A673 (cell line): ENCODE measurements at regions of chr2 and their contacts with region 1.

Region 1: DNA sequence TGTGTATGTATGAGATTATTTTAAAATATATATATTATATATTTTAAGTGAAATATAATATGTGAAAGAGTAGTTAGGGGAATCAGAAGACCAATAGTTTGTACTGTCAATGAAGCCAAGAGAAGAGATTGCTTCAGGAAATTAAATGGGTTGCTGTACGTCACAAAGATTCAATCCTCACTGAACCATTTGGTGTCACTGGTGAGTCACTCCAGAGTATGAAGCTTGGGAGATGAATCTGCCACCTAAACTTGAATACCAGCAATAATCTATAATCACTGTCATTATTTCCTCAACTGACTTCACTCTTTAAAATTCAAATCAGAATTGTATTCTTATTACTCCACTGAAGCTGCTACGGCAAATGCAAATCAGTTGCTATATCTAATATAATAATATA is 41.9 kb upstream of the SCN9A start:
- DNase-seq: peak; percentile 78
- H3K4me3 ChIP-seq: no peak overlapping the region
- H3K27ac ChIP-seq: no peak overlapping the region
- H3K4me1 ChIP-seq: no peaks in the 10 kb centered on the region
- H3K27me3 ChIP-seq: no peaks in the 10 kb centered on the region
- CTCF ChIP-seq: peak; percentile 57

Region 2: GRCh38 chr2:165953655-165954606 is 463.7 kb before region 1 on chr2 and contains the start of gene TTC21B:
- CTCF ChIA-PET with region 1: no interaction called
- POLR2A ChIA-PET with region 1: no interaction called
- intact Hi-C with region 1: loop called (anchors 10 kb)
- DNase-seq: peak; percentile 99
- H3K4me3 ChIP-seq: peak within 1 kb of the TSS; percentile 68
- H3K27ac ChIP-seq: peak within 1 kb of the TSS; percentile 86
- H3K4me1 ChIP-seq: peaks cover 31% of the 10 kb centered on the region
- H3K27me3 ChIP-seq: no peaks in the 10 kb centered on the region
- CTCF ChIP-seq: peak; percentile 90
- total RNA-seq, gene TTC21B: 83.0 TPM in 2 replicates

Region 3: DNA sequence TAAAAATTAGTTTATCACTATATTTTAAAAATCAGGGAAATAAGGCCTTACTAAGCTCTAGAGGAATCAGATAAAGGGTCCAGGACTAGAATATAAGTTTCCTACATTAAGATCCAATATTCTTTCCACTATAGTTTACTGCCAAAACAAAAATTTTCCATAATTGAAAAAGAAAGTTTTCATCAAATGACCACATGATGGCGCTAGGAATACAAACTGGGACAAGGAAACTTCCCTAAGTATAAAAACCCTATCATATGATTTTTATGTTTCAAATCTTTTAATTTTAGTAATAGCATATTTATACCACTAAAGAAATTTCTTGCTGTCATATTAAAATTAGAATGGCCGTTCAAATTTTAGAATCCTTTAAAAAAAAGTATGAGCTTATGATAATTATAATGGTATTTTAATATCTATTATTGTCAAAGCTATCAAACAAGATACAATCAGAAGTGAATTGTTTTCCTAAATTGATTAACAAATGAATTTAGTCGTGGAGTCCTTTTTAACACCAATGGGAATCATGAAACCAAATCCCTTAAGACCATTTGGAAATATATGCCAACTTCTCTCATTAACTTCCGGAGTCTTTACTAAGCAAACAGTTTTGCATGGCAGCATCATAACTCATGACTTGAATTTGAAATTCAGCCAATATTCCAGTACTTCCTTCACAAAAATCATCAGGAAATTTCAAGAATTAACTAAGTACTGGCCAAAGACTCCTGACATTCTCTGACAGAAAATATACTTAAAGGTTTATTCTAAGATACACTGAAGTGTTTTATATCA is 360.1 kb before region 1 on chr2:
- CTCF ChIA-PET with region 1: no interaction called
- POLR2A ChIA-PET with region 1: no interaction called
- intact Hi-C with region 1: loop called (anchors 2 kb)
- DNase-seq: peak; percentile 48
- H3K4me3 ChIP-seq: no peak overlapping the region
- H3K27ac ChIP-seq: no peak overlapping the region
- H3K4me1 ChIP-seq: no peaks in the 10 kb centered on the region
- H3K27me3 ChIP-seq: no peaks in the 10 kb centered on the region
- CTCF ChIP-seq: peak; percentile 73

Region 4: DNA sequence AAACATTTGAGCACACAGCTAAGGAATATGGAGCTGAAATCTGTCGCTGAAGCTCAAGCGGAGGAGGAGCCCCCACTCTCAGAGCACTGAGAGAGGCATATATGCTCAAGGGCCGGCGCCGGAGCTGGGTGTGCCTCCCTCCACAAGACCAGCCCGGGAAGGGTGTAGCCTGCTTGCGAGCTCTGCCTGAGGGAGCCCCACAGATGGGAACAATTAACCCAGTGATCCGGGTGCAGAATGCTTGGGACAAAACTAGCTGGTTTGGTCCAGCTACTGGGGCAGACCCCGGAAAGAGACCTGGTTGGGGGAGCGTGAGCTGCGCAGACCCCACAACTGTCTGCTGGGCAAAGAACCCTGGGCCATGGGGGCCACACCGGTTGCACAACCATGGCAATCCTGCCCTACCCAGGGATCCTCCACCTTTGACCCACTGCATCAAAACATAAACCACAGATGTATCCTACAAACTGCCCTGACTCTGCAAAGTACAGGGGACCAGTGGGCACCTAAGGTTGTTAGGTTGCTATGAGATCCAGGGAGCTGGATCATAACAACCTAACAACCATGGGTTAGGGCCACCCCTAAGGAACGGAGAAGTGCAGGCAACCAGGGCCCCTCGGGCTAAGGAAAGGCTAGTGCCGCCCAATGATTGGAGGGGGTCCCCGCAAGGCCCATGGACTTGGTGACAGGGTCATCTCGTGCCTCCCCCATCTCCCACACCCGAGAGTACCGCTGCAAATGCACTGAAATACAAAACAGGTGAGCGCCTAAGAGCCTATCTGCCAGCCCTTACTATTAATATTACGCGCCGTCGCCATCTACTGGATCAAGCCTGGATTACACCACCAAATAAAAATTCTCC is 236.5 kb before region 1 on chr2:
- CTCF ChIA-PET with region 1: interaction called, 3 read pairs
- POLR2A ChIA-PET with region 1: no interaction called
- intact Hi-C with region 1: loop called (anchors 5 kb)
- DNase-seq: peak; percentile 73
- H3K4me3 ChIP-seq: no peak overlapping the region
- H3K27ac ChIP-seq: no peak overlapping the region
- H3K4me1 ChIP-seq: no peaks in the 10 kb centered on the region
- H3K27me3 ChIP-seq: no peaks in the 10 kb centered on the region
- CTCF ChIP-seq: peak; percentile 75

Region 5: GRCh38 chr2:166284359-166284758 is 133.3 kb before region 1 on chr2:
- CTCF ChIA-PET with region 1: no interaction called
- POLR2A ChIA-PET with region 1: interaction called, 10 read pairs
- intact Hi-C with region 1: no loop called
- DNase-seq: no peak
- H3K4me3 ChIP-seq: no peak overlapping the region
- H3K27ac ChIP-seq: no peak overlapping the region
- H3K4me1 ChIP-seq: no peaks in the 10 kb centered on the region
- H3K27me3 ChIP-seq: no peaks in the 10 kb centered on the region
- CTCF ChIP-seq: no peak

Region 6: GRCh38 chr2:166344286-166345113 is 73.2 kb before region 1 on chr2:
- CTCF ChIA-PET with region 1: no interaction called
- POLR2A ChIA-PET with region 1: no interaction called
- intact Hi-C with region 1: no loop called
- DNase-seq: peak; percentile 49
- H3K4me3 ChIP-seq: no peak overlapping the region
- H3K27ac ChIP-seq: peak overlapping the region; percentile 0
- H3K4me1 ChIP-seq: peaks cover 35% of the 10 kb centered on the region
- H3K27me3 ChIP-seq: no peaks in the 10 kb centered on the region
- CTCF ChIP-seq: no peak

Region 7: GRCh38 chr2:166516712-166517303 is 99.1 kb after region 1 on chr2:
- CTCF ChIA-PET with region 1: no interaction called
- POLR2A ChIA-PET with region 1: no interaction called
- intact Hi-C with region 1: loop called (anchors 5 kb)
- DNase-seq: peak; percentile 57
- H3K4me3 ChIP-seq: no peak overlapping the region
- H3K27ac ChIP-seq: no peak overlapping the region
- H3K4me1 ChIP-seq: no peaks in the 10 kb centered on the region
- H3K27me3 ChIP-seq: no peaks in the 10 kb centered on the region
- CTCF ChIP-seq: peak; percentile 72